GM12878 (cell line): ENCODE measurements at regions of chr3 and their contacts with region 1.

Region 1: DNA sequence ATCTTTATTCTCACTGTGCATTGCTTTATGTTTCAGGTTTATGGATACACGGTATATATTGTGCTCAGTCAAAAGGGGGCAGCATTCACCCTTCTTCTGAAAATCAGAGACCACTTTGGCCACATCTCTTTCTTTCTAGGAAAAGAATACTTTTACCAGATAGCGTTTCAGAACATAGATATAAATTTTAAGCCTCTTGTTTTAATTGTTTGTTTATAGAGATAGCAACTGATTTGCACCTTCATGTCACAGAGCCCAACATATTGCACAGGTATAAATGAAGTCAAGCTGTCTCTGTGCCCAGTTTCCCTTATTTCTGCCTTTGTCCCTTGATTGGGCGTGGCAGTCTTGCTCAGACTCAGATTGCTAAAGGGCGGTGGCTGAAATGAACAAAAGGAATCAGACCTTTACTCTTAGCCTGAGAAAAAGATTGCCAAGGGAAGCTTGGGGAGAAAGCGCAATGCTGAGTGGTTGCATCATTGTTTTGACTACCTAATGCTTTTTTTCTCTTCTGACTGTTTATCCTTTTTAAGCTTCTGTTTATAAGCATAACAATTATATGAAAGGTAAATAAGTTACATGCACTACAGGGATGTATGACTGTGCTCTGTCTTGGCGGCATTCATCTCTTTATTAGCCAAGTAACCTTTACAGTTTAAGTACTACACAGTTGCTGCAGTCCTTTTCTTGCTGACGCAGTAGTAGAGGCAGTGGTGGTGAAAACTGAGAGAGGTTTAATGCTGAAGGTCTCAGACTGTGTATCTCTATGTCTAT is 70.8 kb upstream of the ZBTB20 start:
- DNase-seq: no peak
- ATAC-seq: peak; percentile 76
- H3K4me3 ChIP-seq: no peak overlapping the region
- H3K27ac ChIP-seq: no peak overlapping the region
- H3K4me1 ChIP-seq: no peaks in the 10 kb centered on the region
- H3K27me3 ChIP-seq: no peaks in the 10 kb centered on the region
- CTCF ChIP-seq: peak; percentile 40 to 60 (median 59); a peak in 5 of 6 replicates
- EP300 ChIP-seq: no peak
- POLR2A ChIP-seq: no peak
- RAD21 ChIP-seq: peak; percentile 82

Region 2: GRCh38 chr3:115099986-115100571 is 117.8 kb before region 1 on chr3:
- CTCF ChIA-PET with region 1: no interaction called
- POLR2A ChIA-PET with region 1: no interaction called
- RAD21 ChIA-PET with region 1: no interaction called
- SMC1A ChIA-PET with region 1: no interaction called
- in situ Hi-C with region 1: no loop called
- intact Hi-C with region 1: no loop called
- DNase-seq: peak; percentile 9
- ATAC-seq: peak; percentile 50
- H3K4me3 ChIP-seq: peak overlapping the region; percentile 38
- H3K27ac ChIP-seq: 0 out of 2 replicates have a peak overlapping the region, but pooled peaks have one; percentile 33
- H3K4me1 ChIP-seq: no peaks in the 10 kb centered on the region
- H3K27me3 ChIP-seq: no peaks in the 10 kb centered on the region
- CTCF ChIP-seq: no peak
- EP300 ChIP-seq: no peak
- POLR2A ChIP-seq: no peak
- RAD21 ChIP-seq: 0 out of 2 replicates have a peak, but pooled peaks have one; percentile 7

Region 3: GRCh38 chr3:115692887-115693524 is 475.1 kb after region 1 on chr3:
- CTCF ChIA-PET with region 1: interaction called, 31 read pairs
- POLR2A ChIA-PET with region 1: no interaction called
- RAD21 ChIA-PET with region 1: interaction called, 7 read pairs
- SMC1A ChIA-PET with region 1: interaction called, 10 read pairs
- in situ Hi-C with region 1: loop called (anchors 5 kb)
- intact Hi-C with region 1: loop called (anchors 1 kb)
- DNase-seq: peak; percentile 32
- ATAC-seq: peak; percentile 99
- H3K4me3 ChIP-seq: no peak overlapping the region
- H3K27ac ChIP-seq: no peak overlapping the region
- H3K4me1 ChIP-seq: no peaks in the 10 kb centered on the region
- H3K27me3 ChIP-seq: no peaks in the 10 kb centered on the region
- CTCF ChIP-seq: peak; percentile 73 to 91 (median 82); a peak in 5 of 6 replicates
- EP300 ChIP-seq: no peak
- POLR2A ChIP-seq: no peak
- RAD21 ChIP-seq: peak; percentile 100

Region 4: DNA sequence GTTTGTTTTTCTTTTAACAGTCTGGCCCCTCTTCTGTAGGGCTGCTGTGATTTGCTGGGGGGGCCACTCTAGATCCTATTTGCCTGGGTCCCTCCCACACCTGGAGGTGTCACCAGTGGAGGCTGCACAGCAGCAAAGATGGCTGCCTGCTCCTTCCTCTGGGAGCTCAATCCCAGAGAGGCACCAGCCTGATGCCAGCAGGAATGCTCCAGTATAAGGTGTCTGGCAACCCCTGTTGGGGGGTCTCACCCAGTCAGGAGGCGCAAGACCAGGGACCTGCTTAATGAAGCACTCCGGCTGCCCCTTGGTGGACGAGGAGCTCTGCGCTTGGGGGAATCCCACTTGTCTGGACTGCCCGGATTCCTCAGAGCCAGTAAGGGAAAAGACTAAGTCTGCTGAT is 523.8 kb after region 1 on chr3:
- CTCF ChIA-PET with region 1: no interaction called
- POLR2A ChIA-PET with region 1: interaction called, 11 read pairs
- RAD21 ChIA-PET with region 1: no interaction called
- SMC1A ChIA-PET with region 1: no interaction called
- in situ Hi-C with region 1: no loop called
- intact Hi-C with region 1: no loop called
- DNase-seq: no peak
- ATAC-seq: no peak
- H3K4me3 ChIP-seq: no peak overlapping the region
- H3K27ac ChIP-seq: no peak overlapping the region
- H3K4me1 ChIP-seq: no peaks in the 10 kb centered on the region
- H3K27me3 ChIP-seq: no peaks in the 10 kb centered on the region
- CTCF ChIP-seq: no peak
- EP300 ChIP-seq: no peak
- POLR2A ChIP-seq: no peak
- RAD21 ChIP-seq: no peak

Region 5: GRCh38 chr3:115783938-115784738 is 566.3 kb after region 1 on chr3:
- CTCF ChIA-PET with region 1: interaction called, 25 read pairs
- POLR2A ChIA-PET with region 1: no interaction called
- RAD21 ChIA-PET with region 1: interaction called, 3 read pairs
- SMC1A ChIA-PET with region 1: interaction called, 12 read pairs
- in situ Hi-C with region 1: loop called (anchors 10 kb)
- intact Hi-C with region 1: loop called (anchors 1 kb)
- DNase-seq: peak; percentile 15
- ATAC-seq: peak; percentile 94
- H3K4me3 ChIP-seq: peak overlapping the region; percentile 59; the same call in 1 of the 2 replicates
- H3K27ac ChIP-seq: no peak overlapping the region
- H3K4me1 ChIP-seq: no peaks in the 10 kb centered on the region; the same call in 1 of the 2 replicates
- H3K27me3 ChIP-seq: peaks cover 0 to 3% of the 10 kb centered on the region in 2 experiments; a peak in 1 of 4 replicates
- CTCF ChIP-seq: peak; percentile 96 to 98 (median 96)
- EP300 ChIP-seq: no peak
- POLR2A ChIP-seq: peak; percentile 62; the same call in 1 of the 2 replicates
- RAD21 ChIP-seq: peak; percentile 65

Region 6: GRCh38 chr3:115814778-115815380 is 597.0 kb after region 1 on chr3:
- CTCF ChIA-PET with region 1: interaction called, 17 read pairs
- POLR2A ChIA-PET with region 1: no interaction called
- RAD21 ChIA-PET with region 1: no interaction called
- SMC1A ChIA-PET with region 1: interaction called, 3 read pairs
- in situ Hi-C with region 1: no loop called
- intact Hi-C with region 1: loop called (anchors 2 kb)
- DNase-seq: no peak
- ATAC-seq: peak; percentile 73
- H3K4me3 ChIP-seq: no peak overlapping the region
- H3K27ac ChIP-seq: no peak overlapping the region
- H3K4me1 ChIP-seq: no peaks in the 10 kb centered on the region
- H3K27me3 ChIP-seq: no peaks in the 10 kb centered on the region; a peak in 1 of 4 replicates
- CTCF ChIP-seq: peak; percentile 85
- EP300 ChIP-seq: no peak
- POLR2A ChIP-seq: no peak
- RAD21 ChIP-seq: peak; percentile 68